Prostate gland (tissue), 2 donors: ENCODE measurements at regions of chr22 and their contacts with region 1.

Region 1: GRCh38 chr22:41697126-41697775 is 2.1 kb upstream of the MEI1 start:
- DNase-seq: peak; percentile 80
- H3K4me3 ChIP-seq: no peak overlapping the region
- H3K27ac ChIP-seq: peak overlapping the region; percentile 15 to 47
- H3K4me1 ChIP-seq: no peaks in the 10 kb centered on the region
- H3K27me3 ChIP-seq: no peaks in the 10 kb centered on the region
- CTCF ChIP-seq: peak; percentile 90 to 97 (median 96)
- POLR2A ChIP-seq: no peak

Region 2: DNA sequence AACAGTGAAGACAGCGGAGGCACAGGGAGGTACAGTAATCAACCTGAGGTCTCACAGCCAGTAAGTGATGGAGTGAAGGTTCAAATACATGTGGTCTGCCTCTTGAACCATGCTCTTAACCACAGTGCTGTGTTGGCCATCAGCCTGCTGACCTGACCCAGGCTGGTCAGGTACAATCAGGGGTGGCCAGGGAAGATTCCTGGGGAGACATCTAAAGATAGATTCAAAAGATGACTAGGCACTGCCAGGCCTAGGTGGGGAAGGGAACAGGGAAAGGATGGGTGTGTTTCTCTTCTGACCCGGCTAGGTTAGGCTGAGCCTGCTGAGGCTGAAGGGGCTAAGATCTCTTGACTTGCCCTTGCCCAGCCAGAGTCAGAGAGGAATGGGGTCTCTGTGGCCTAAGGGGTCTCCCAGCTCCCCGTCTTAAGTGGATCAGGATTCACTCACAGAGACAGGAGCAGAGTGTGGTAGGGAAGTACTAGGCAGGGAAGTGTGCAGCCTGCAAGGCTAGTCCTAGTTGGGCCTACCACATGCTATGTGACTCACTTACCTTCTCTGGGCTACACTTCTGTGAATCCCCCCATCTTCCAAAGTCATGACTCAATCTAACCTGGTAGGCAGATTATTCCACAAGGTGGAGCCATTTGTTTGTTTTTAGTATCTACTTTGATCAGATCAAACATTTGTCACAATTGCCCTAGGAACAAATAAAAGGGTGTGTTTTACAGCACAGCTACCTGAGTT is 125.2 kb after region 1 on chr22:
- intact Hi-C with region 1: loop called (anchors 10 kb)
- DNase-seq: peak; percentile 58
- H3K4me3 ChIP-seq: no peak overlapping the region
- H3K27ac ChIP-seq: no peak overlapping the region
- H3K4me1 ChIP-seq: no peaks in the 10 kb centered on the region
- H3K27me3 ChIP-seq: no peaks in the 10 kb centered on the region
- CTCF ChIP-seq: peak in 3 of 4 experiments; percentile 62 to 79 (median 77)
- POLR2A ChIP-seq: no peak